K562 (cell line): ENCODE measurements at regions of chr7 and their contacts with region 1.

Region 1: DNA sequence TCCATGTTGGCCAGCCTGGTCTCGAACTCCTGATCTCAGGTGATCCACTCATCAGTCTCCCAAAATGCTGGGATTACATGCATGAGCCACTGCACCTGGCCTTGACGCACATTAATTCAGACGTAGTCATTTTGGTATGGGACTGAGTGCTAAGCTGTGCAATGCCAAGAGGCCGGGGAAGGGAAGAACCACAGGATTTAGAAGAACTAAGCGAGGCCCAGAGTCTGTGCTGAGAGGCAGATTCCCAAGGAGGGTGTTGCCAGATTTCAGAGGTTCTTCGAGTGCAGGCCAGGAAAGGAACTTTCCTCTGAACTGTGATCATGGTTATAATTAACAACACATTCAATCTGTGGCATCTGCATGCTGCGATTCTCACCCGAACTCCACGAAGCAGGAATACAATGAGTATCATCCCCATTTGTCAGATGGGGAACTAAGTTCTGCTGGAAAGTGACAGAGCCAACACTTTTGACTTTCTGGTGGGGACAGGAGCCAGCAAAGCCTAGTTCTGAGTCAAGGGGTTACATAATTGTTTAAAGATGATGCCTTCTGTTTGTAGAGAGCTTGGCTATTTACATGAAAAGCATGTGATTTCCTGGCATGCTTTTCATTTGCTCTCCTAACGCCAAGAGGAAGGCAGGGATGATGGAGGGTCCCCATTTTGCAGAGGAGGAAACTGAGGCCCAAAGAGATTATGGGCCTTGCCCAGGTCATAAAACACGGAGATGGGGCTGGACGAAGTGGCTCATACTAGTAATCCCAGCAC is 6.2 kb upstream of the ZAN start:
- DNase-seq: no peak
- ATAC-seq: no peak
- H3K4me3 ChIP-seq: no peak overlapping the region
- H3K27ac ChIP-seq: no peak overlapping the region
- H3K4me1 ChIP-seq: peaks cover 0 to 13% of the 10 kb centered on the region in 2 experiments; a peak in 3 of 5 replicates
- H3K27me3 ChIP-seq: peaks cover 6 to 21% of the 10 kb centered on the region in 2 experiments; a peak in 3 of 5 replicates
- CTCF ChIP-seq: no peak
- EP300 ChIP-seq: no peak
- POLR2A ChIP-seq: no peak
- RAD21 ChIP-seq: no peak

Region 2: DNA sequence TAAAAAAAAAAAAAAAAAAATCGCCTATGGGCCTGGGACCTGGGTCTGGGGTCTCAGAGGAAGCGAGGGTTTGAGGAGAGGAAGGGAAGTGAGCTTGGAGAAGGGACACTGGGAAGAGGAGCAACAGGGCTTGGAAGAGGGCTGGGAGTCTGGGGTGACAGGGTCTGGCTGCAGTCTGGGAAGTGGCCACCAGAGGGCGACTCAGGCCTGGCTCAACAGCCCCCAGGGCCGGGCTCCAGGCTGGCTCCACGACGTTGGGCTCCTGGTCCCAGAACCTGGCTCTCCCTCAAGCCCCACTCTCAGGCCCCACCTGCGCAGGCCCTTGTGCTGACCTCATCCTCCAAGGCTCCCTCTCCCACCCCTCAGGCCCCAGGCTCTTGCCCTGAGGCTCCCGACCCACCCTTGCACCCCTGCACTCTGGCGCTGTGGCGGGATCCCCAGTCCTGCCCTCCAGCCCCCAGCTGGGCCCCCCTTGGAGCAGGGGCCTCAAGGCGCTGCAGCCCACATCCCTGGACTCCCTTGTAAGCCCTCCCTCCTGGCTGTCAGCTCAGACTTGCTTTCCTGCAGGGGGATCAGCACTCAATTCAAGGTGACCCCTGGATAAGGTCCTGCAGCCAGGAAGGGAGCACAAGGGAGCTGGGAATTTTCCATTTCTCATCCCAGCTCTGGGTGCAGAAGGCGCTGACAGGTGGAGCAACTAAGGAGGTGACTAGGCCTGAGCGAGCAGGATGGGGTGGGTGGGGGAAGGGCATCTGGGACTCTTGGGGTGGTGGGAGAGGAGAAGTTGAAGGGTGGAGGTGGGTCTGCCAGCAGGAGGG is 257.7 kb before region 1 on chr7:
- CTCF ChIA-PET with region 1: interaction called, 7 read pairs
- POLR2A ChIA-PET with region 1: no interaction called
- in situ Hi-C with region 1: no loop called
- intact Hi-C with region 1: loop called (anchors 2 kb)
- DNase-seq: peak; percentile 88 to 92 (median 90)
- ATAC-seq: peak; percentile 87
- H3K4me3 ChIP-seq: no peak overlapping the region
- H3K27ac ChIP-seq: no peak overlapping the region
- H3K4me1 ChIP-seq: peaks cover 17 to 52% of the 10 kb centered on the region in 2 experiments
- H3K27me3 ChIP-seq: no peaks in the 10 kb centered on the region
- CTCF ChIP-seq: peak; percentile 95 to 98 (median 98)
- EP300 ChIP-seq: no peak
- POLR2A ChIP-seq: 0 out of 2 replicates have a peak, but pooled peaks have one; percentile 18
- RAD21 ChIP-seq: peak; percentile 92 to 94

Region 3: GRCh38 chr7:100745184-100745583 is 18.0 kb after region 1 on chr7:
- CTCF ChIA-PET with region 1: no interaction called
- POLR2A ChIA-PET with region 1: interaction called, 11 read pairs
- in situ Hi-C with region 1: no loop called
- intact Hi-C with region 1: loop called (anchors 2 kb)
- DNase-seq: peak; percentile 61 to 80 (median 74)
- ATAC-seq: peak; percentile 94
- H3K4me3 ChIP-seq: peak overlapping the region; percentile 34
- H3K27ac ChIP-seq: no peak overlapping the region; the same call in 2 of the 3 replicates
- H3K4me1 ChIP-seq: peaks cover 2 to 6% of the 10 kb centered on the region in 2 experiments; a peak in 2 of 5 replicates
- H3K27me3 ChIP-seq: peaks cover 7 to 24% of the 10 kb centered on the region in 2 experiments; a peak in 3 of 5 replicates
- CTCF ChIP-seq: no peak
- EP300 ChIP-seq: no peak
- POLR2A ChIP-seq: peak; percentile 50; the same call in 1 of the 2 replicates
- RAD21 ChIP-seq: no peak

Region 4: DNA sequence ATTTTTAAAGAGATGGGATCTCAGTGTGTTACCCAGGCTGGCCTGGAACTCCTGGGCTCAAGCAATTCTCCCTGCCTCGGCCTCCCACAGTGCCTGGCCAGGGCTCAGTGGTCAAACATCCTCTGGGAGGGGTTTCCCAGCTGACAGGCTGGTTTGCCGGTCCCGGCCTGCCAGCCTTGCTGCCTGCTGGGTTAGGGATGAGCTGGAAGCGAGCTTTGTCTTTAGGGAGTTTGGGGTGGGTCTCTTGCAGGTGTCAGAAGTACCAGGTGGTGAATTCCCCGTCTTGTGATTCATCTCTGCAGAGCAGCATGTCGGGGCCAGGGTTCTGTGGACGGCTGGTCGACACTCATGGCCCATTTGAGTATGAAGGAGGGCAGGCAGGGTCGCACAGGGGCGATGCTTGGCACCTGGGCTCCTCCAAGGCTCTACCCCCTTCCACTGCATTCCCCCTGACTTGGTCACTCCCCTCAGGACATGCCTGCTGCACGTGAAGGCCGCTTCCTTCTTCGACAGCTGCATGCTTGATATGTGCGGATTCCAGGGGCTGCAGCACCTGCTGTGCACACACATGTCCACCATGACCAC is 36.5 kb after region 1 on chr7:
- CTCF ChIA-PET with region 1: no interaction called
- POLR2A ChIA-PET with region 1: no interaction called
- in situ Hi-C with region 1: no loop called
- intact Hi-C with region 1: no loop called
- DNase-seq: peak in 2 of 4 experiments; percentile 7 to 10
- ATAC-seq: no peak
- H3K4me3 ChIP-seq: no peak overlapping the region
- H3K27ac ChIP-seq: no peak overlapping the region
- H3K4me1 ChIP-seq: peaks cover 0 to 8% of the 10 kb centered on the region in 2 experiments; a peak in 2 of 5 replicates
- H3K27me3 ChIP-seq: peaks cover 58 to 88% of the 10 kb centered on the region in 2 experiments
- CTCF ChIP-seq: no peak
- EP300 ChIP-seq: no peak
- POLR2A ChIP-seq: no peak
- RAD21 ChIP-seq: no peak

Region 5: DNA sequence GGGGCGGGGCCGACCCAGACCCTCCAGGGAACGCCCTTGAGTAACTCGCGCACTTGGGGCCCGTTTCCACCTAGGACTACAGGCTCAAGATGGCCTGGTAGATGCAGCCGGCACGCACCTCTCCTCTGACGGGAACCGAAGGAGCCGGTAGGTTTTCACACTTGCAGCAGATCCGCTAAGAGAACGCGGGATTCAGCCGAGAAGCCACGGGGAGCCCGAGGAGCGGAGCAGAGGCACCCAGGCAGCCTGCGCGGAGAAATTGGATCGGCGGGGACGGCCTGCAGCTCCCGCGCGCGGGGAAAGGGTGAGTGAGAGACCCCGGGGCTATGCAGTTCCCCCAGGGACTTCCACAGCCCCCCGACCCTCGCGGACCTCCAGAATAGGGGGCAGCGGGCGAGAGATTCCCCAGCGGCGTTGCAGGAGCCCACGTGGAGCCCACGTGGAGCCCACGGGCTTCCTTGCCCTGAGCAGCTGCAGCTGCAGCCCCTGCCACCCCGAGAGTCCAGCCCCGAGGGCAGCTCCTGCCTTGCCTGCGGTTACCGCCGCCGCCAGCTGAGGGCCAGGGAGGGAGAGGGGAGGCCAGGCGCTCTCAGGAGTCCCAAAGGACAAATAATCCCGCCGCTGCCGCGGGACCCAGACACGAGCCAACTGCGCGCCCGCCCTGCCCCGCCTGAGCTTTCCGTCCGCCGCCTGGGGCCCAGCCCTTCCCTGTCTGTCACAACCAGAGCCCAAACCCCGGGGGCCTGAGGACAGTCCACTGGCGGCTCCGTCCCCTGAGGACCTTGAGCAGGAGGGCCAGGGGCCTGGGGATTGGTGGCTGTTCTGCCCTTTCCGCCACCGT is 581.3 kb after region 1 on chr7:
- CTCF ChIA-PET with region 1: no interaction called
- POLR2A ChIA-PET with region 1: no interaction called
- in situ Hi-C with region 1: no loop called
- intact Hi-C with region 1: no loop called
- DNase-seq: peak; percentile 76 to 87 (median 76)
- ATAC-seq: peak; percentile 97
- H3K4me3 ChIP-seq: peak overlapping the region; percentile 48
- H3K27ac ChIP-seq: peak overlapping the region; percentile 72
- H3K4me1 ChIP-seq: peaks cover 0 to 14% of the 10 kb centered on the region in 2 experiments; a peak in 2 of 5 replicates
- H3K27me3 ChIP-seq: peaks cover 2 to 9% of the 10 kb centered on the region in 2 experiments; a peak in 3 of 5 replicates
- CTCF ChIP-seq: no peak
- EP300 ChIP-seq: no peak
- POLR2A ChIP-seq: peak; percentile 70
- RAD21 ChIP-seq: no peak